ENCODE measurements at regions of chr16 and their contacts with region 1.

Region 1: DNA sequence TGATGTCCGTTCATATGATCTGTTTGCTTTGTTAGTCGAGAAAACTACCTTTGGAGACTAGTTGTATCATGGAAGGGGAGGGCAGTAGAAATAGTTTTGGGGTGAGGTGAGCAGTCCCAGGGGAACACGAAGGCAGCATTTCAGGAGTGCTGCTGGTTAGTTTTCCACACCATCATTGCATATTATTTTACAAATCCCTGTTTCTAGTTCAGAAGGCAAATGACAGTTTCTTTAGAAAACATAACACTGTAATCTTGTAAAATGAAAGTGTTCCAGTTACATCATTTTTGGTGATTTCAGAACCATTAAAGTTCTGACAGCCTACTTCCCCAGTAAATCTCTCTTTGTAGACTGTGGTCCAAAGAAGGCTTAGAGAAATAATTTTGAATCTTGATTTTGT is 25.4 kb downstream of the BANP start:
- DNase-seq: no peak
- H3K4me3 ChIP-seq: no peak overlapping the region
- H3K27ac ChIP-seq: no peak overlapping the region
- H3K4me1 ChIP-seq: no peaks in the 10 kb centered on the region
- H3K27me3 ChIP-seq: no peaks in the 10 kb centered on the region
- CTCF ChIP-seq: no peak
- EP300 ChIP-seq: no peak
- POLR2A ChIP-seq: no peak

Region 2: DNA sequence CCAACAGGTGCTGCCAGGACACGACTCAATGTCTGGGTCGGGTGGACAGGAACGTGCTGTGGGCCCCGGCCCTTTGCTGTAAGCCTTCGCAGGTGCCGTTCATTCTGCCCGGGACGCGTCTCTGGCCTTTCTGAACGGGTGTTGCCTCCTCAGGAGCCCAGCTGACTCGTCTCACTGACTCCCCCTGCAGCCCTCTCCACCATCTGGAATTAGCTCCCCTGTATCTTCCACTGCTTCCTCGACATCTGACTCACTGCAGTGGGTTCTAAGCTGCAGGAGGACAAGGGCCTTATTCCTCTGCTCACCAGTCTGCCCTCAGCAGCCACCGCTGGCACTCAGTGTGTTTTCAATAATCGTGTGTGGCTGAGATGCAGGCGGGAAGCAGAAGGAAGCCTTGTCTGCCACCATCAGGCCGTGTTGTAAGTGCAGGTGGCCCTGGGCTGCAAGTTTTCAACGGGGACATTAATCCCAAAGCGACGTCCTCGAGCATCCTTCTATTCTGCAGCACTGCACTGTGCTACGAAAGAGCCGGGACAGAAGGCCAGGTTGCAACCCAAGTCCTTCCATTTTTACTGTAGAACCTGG is 1142.1 kb before region 1 on chr16:
- intact Hi-C with region 1: no loop called
- DNase-seq: no peak
- H3K4me3 ChIP-seq: no peak overlapping the region
- H3K27ac ChIP-seq: no peak overlapping the region
- H3K4me1 ChIP-seq: peaks cover 3% of the 10 kb centered on the region
- H3K27me3 ChIP-seq: no peaks in the 10 kb centered on the region
- CTCF ChIP-seq: no peak
- EP300 ChIP-seq: no peak
- POLR2A ChIP-seq: no peak

Region 3: DNA sequence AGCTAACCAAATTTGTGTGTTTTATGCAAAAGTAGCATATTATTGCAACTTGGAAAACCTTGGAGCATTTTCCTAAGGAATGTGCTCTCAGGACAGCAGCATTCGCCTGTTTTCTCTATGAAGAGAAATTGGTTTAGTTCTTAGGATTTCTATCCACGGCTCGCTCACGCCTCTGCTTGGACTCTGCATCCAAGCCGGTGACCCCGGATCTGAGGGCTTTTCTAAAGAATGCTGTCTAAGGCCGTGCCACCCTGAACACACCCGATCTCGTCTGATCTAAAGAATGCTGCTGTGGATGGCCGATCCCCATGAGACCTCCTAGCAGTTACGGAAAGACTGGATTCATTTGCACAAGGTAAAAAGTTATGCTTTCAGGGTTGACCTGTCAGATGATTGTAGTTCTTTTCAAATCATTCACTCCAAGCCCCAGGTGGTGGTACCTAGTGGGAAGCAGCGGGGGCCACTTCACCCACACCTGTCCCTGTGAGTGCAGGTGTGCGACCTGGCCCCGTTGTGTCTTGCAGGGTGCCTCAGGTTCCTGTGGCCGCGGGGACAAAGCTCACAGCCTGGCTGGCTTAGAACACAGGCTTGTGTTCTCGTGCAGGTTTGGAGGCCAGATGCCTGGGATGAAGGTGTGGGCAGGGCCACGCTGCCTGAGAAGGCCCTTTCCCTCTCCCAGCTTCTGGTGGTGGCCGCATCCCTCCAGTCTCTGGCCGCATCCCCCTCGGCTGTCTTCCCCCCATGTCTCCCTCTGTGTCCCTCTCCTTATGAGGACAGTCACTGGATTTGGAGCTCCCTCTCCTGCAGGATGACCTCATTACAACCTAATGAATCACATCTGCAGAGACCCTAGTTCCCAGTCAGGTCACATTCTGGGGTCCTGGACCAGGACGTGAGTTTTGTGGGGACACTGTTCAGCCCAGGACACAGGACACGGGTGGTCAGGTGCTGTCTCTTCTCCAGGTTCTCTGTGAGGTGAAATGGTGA is 45.7 kb after region 1 on chr16:
- intact Hi-C with region 1: no loop called
- DNase-seq: peak in 2 of 5 donors; percentile 16 to 28
- H3K4me3 ChIP-seq: no peak overlapping the region
- H3K27ac ChIP-seq: no peak overlapping the region
- H3K4me1 ChIP-seq: peaks cover 5% of the 10 kb centered on the region
- H3K27me3 ChIP-seq: no peaks in the 10 kb centered on the region
- CTCF ChIP-seq: no peak
- EP300 ChIP-seq: no peak
- POLR2A ChIP-seq: no peak

Region 4: DNA sequence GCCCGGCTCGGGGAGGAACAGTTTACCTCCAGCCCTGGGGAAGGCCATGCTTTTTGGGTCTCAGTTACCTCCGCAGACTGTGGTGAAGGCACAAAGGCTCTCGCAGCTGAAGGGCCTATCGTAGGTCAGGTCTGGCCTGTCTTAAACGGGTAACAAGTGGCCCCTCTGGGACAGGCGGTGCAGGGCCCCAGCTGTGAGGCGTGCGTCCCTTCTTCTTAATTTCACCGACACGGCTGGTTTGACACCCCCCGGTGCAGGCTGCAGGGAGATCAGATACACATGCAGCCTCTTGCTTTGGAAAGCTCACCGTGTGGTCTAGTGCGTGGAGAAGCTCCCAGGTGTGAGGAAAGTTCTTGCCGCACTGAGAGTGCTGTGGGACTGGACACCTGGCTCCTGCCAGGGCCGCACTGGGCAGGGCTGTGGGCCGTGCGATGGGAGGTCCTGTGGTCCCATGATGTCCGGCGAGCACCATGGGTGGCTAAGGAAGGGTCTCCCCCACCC is 136.9 kb after region 1 on chr16:
- intact Hi-C with region 1: no loop called
- DNase-seq: peak in 1 of 5 donors; percentile 11
- H3K4me3 ChIP-seq: no peak overlapping the region
- H3K27ac ChIP-seq: no peak overlapping the region
- H3K4me1 ChIP-seq: peaks cover 3% of the 10 kb centered on the region
- H3K27me3 ChIP-seq: no peaks in the 10 kb centered on the region
- CTCF ChIP-seq: no peak
- EP300 ChIP-seq: no peak
- POLR2A ChIP-seq: no peak

Region 5: DNA sequence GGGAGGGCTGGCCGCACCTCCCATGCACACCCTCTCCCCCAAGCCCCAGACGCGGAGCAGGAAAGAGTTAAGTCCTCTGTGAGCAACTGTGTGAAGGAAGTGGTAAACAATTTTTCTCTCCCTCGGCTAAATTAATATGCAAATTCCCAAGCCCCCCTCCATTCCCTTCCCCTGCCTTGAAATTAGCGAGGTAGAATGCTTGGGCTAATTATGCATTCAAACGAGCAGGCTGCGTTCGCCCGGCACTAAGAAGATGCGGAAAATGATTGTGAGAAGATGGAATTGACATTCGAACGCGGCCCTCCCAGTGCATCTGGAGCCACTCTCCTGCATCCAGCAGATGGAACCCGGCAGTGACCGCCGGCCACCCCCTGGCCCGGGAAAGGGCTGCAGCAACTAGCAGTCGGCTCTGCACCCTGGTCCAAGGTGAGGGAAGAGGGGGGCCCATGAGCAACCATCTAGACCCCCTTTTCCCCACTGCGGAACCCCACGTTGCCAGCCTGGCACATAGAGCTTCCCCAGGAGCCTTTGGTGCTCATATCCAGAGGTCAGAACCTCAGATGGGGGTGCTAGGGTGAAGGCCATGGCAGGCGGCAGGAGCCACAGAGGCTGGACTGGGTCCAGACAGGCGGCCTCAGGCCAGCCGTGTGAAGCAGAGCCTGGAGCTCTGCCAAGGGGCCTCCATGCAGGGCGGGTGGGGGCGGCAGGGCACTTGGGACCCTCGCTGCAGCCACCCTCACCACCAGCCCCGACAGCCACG is 1067.9 kb after region 1 on chr16:
- intact Hi-C with region 1: loop called in 1 of 4 experiments (anchors 5 kb)
- DNase-seq: peak in 1 of 5 donors; percentile 12
- H3K4me3 ChIP-seq: no peak overlapping the region
- H3K27ac ChIP-seq: no peak overlapping the region
- H3K4me1 ChIP-seq: no peaks in the 10 kb centered on the region
- H3K27me3 ChIP-seq: no peaks in the 10 kb centered on the region
- CTCF ChIP-seq: no peak
- EP300 ChIP-seq: no peak
- POLR2A ChIP-seq: no peak